ENCODE measurements at regions of chr9 and their contacts with region 1.

Region 1: GRCh38 chr9:131349881-131350563 is 43.9 kb upstream of the PRRC2B start:
- DNase-seq: peak; percentile 95
- ATAC-seq: peak; percentile 93

Region 2: DNA sequence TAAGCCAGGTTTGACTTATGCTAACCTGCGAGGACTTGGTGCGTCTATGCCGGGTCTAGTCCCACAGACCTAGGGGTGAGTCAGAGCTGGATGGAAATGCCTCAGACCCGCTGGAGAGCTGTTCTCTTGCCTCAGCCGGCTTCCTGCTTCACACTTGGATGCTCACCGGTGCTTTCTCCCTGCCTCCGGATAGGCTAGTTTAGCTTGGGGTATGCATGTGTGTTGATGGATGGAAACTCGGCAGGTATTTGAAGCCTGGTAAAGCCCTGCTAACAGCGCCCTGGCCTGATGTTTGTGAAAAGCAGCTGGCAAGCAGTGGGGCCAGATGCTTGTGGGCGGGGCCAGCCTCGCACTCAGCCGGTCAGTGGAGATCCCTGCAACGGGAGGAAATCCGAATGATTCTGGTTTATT is 73.2 kb after region 1 on chr9:
- intact Hi-C with region 1: loop called (anchors 5 kb)
- DNase-seq: no peak
- ATAC-seq: peak; percentile 69

Region 3: GRCh38 chr9:131478421-131478868 is 128.4 kb after region 1 on chr9:
- intact Hi-C with region 1: loop called (anchors 5 kb)
- DNase-seq: no peak
- ATAC-seq: no peak

Region 4: GRCh38 chr9:131747356-131747755 is 397.3 kb after region 1 on chr9:
- intact Hi-C with region 1: loop called (anchors 5 kb)
- DNase-seq: peak; percentile 39
- ATAC-seq: peak; percentile 54